ENCODE measurements at regions of chr6 and their contacts with region 1.

Region 1: DNA sequence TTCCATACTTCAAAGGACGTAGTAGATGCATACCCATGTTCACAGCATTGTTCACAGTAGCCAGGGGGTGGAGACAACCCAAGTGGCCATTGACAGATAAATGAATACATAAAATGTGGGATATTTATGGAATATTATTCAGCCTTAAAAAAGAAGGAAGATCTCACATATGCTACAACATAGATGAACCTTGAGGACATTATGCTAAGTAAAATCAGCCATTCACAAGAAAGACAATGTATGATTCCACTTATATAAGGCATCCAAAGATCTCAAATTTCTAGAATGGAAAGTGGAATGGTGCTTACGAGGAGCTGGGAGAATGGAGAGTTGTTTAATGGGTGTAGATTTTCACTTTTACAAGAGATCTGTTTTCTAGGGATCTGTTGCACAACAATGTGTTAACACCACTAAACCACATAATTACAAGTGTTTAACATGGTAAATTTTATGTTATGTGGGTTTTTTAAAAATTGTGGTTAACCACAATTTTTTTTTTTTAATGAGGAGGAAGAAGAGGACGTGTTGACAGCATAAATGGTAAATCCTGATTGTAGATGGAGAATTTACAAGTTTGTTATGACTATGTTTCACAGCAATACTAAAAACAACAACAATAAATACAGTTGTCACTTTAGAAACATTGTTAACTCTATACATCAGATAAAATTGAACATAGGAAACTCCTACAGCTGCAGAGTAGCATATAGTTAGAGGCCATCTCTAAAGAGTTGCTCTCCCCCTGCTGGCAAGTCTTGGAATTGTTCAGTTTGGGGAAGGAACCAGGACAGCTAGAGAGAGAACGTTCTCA is 41.6 kb downstream of the CCN2 start:
- DNase-seq: no peak
- H3K4me3 ChIP-seq: no peak overlapping the region
- CTCF ChIP-seq: peak; percentile 83

Region 2: GRCh38 chr6:131894735-131895424 is 14.7 kb before region 1 on chr6:
- CTCF ChIA-PET with region 1: interaction called, 17 read pairs
- POLR2A ChIA-PET with region 1: no interaction called
- DNase-seq: no peak
- H3K4me3 ChIP-seq: no peak overlapping the region
- CTCF ChIP-seq: no peak

Region 3: DNA sequence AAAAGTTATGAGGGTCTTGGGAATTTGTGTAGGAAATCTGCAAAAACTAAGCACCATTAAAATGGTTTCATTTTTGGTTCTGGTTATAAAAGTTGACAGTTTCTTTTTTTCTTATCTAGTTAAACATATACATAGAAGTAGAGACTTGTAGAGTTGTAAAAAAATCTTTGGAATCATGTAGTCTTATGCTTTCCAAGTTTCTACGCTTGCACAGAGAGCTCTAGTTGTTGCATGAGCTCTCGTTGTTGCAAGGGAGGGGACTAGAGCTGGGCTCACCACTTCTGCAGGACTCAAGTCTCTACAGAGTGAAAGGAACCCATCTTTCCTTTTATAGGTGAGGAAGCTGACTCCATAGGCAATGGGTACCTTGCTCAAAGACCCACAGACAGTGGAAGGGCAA is 63.1 kb after region 1 on chr6:
- CTCF ChIA-PET with region 1: no interaction called
- POLR2A ChIA-PET with region 1: no interaction called
- DNase-seq: no peak
- H3K4me3 ChIP-seq: no peak overlapping the region
- CTCF ChIP-seq: no peak

Region 4: GRCh38 chr6:132041706-132042105 is 132.1 kb after region 1 on chr6:
- CTCF ChIA-PET with region 1: no interaction called
- POLR2A ChIA-PET with region 1: no interaction called
- DNase-seq: peak; percentile 54
- H3K4me3 ChIP-seq: no peak overlapping the region
- CTCF ChIP-seq: no peak

Region 5: DNA sequence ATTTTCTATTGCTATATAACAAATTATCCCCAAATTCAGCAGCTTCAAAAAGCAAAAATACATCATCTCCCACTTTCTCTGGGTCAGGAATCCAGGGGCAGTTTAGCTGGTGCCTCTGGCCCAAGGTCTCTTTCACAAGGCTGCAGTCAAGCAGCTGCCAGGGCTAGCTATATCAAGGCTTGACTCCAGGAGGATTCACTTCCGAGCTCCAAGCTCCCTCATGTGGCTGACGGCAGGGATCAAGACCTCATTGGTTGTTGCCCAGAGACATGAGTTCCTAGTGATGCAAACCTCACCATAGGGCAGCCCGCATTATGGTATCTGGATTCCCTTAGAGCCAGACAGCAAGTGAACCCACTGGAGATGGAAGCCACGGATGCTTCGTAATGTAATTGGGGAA is 805.6 kb after region 1 on chr6:
- CTCF ChIA-PET with region 1: no interaction called
- POLR2A ChIA-PET with region 1: no interaction called
- DNase-seq: no peak
- H3K4me3 ChIP-seq: no peak overlapping the region
- CTCF ChIP-seq: peak; percentile 22

Measured in AG04449 (cell line).